ENCODE measurements at regions of chr2 and their contacts with region 1.

Region 1: DNA sequence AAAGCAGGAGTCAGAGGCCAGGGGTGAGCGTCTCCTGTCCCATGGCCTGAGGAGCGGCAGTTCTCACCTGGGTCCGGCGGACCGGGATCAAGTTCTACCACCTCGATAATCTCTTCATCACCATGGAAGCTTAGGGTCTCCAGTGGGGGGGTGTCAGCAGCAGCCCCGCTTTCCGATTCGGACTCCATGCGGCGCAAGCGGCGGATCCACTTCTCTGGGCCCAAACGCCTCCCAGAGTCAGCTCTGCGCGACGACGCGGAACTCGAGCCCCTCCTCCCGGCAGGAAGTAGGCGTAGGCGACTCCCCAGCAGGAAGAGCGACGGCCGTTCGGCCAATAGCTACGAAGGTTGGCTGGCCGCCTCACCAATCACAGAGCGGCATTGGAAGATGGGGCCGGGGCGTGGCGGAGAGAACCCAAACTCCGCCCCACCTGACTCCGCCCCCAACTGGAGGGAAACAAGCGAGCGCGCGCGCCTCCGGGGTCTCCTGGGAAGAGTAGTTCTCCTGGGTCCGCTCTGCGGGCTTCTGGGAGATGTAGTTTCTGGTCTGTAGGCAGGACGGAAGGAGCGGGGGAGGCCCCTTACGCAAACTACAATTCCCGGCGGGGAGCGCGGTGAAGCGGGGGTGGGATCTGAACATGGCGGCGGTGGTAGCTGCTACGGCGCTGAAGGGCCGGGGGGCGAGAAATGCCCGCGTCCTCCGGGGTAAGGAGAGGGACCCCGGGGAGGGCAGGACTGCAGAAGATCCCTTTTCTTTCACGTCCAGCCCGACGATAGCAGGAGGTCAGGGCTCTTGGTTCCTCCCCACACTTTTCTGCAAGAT is at the starts of genes AAMP and PNKD:
- DNase-seq: peak; percentile 100
- ATAC-seq: peak; percentile 91 to 95 (median 93)
- H3K4me3 ChIP-seq: peak within 1 kb of the TSS; percentile 88
- H3K27ac ChIP-seq: peak within 1 kb of the TSS; percentile 91
- H3K4me1 ChIP-seq: peaks cover 40% of the 10 kb centered on the region
- H3K27me3 ChIP-seq: no peaks in the 10 kb centered on the region
- CTCF ChIP-seq: no peak
- total RNA-seq, gene AAMP: 52.7 to 70.6 (median 62.5) TPM
- total RNA-seq, gene PNKD: 31.5 to 54.5 (median 41.0) TPM

Region 2: GRCh38 chr2:218216674-218217359 is 53.3 kb before region 1 on chr2 and contains the start of gene ARPC2:
- intact Hi-C with region 1: loop called in 1 of 2 experiments (anchors 5 kb)
- DNase-seq: peak; percentile 95 to 97
- ATAC-seq: peak; percentile 94 to 98 (median 96)
- H3K4me3 ChIP-seq: peak within 1 kb of the TSS; percentile 92
- H3K27ac ChIP-seq: peak within 1 kb of the TSS; percentile 95
- H3K4me1 ChIP-seq: peaks cover 38% of the 10 kb centered on the region
- H3K27me3 ChIP-seq: no peaks in the 10 kb centered on the region
- CTCF ChIP-seq: peak; percentile 20
- total RNA-seq, gene ARPC2: 150 to 218 (median 188) TPM

Region 3: DNA sequence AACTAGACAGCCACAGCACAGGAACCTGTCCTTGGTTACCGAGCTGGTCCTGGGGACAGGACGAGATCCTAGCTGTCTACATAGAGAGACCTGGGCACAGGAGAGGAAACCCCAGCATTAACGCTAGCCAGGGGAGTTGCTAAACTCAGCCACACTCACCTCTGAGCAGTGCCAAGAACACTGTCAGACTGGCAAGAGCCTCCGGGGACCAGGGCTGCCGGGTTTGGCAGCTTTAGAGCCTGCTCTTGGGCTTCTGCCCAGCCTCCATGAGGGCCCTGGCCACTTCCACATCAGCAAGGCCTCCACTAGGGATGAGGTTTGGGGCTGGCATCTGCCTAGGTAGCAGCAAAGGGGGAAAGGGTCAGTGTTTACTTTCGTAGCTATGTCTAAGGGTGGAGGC is 15.5 kb after region 1 on chr2:
- intact Hi-C with region 1: loop called in 1 of 2 experiments (anchors 1 kb)
- DNase-seq: peak; percentile 74 to 91
- ATAC-seq: peak; percentile 62 to 73 (median 68)
- H3K4me3 ChIP-seq: peak overlapping the region; percentile 74
- H3K27ac ChIP-seq: peak overlapping the region; percentile 96
- H3K4me1 ChIP-seq: peaks cover 88% of the 10 kb centered on the region
- H3K27me3 ChIP-seq: no peaks in the 10 kb centered on the region
- CTCF ChIP-seq: no peak